B cell (primary cell): ENCODE measurements at regions of chr12 and their contacts with region 1.

Region 1: DNA sequence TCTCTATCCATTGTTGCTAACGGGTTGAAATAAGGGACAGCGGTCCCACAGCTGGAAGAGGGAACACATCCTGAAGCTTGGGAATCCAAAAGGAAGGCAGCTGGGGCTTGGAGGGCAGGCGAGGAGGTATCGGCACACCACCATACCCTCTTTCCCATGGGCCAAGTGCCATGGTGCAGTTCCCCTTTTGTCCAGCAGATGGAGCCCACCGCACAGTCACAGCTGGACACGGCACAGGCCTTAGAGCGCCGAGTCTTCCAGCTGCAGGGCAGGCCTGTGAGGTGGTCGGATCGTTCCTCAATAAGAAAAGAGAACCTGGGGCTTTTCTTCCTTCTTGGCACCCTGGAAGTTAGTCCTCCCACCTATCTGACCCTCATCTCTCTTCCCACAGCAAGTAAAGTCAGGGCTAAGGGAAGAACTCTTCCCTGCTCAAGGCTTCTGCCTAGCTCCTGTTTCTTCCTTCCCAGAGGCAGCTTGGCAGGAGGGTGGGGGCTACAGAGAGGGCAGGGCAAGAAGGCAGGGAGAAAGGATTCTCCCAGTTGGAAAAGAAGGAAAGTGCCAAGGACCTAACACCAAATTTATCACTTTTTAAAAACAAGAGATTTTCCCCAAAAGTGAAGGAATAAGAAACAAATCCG is 8.6 kb downstream of the PPP1R1A start:
- DNase-seq: peak; percentile 81
- ATAC-seq: peak; percentile 99
- H3K4me3 ChIP-seq: no peak overlapping the region
- H3K4me3 Mint-ChIP-seq: no peak overlapping the region
- H3K27ac ChIP-seq: no peak overlapping the region
- H3K27ac Mint-ChIP-seq: no peak overlapping the region
- H3K4me1 ChIP-seq: peaks cover 0 to 5% of the 10 kb centered on the region in 2 donors
- H3K4me1 Mint-ChIP-seq: peaks cover 8% of the 10 kb centered on the region
- H3K27me3 ChIP-seq: peaks cover 0 to 2% (median 0%) of the 10 kb centered on the region in 4 experiments
- H3K27me3 Mint-ChIP-seq: peaks cover 9% of the 10 kb centered on the region
- CTCF ChIP-seq: peak; percentile 99

Region 2: DNA sequence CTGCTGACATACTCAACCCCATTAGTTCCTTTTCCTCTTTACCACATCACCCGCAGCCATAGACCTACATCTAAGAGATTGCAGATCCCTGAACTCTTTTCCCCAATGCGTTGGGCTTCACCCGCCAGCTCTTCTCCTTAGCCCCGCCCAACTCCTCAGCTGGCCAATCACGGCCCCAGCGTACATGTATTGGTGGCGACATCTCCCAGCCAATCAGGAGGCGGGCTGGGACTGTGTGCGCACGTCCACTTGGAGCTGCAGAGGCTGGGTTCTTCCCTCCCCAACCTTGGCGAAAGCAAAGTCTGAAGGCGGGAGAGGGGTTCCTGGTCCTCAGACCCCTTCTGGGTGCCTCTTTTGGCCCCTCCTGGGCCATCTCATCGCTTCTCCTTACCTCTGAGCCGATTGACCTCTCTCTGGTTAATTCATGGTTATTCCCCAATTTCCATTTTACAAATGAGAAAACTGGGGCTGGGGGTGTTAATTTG is 19.4 kb before region 1 on chr12:
- CTCF ChIA-PET with region 1: interaction called, 12 read pairs
- POLR2A ChIA-PET with region 1: no interaction called
- intact Hi-C with region 1: no loop called
- DNase-seq: peak; percentile 88
- ATAC-seq: peak; percentile 100
- H3K4me3 ChIP-seq: peak overlapping the region; percentile 56 to 75 (median 70)
- H3K4me3 Mint-ChIP-seq: peak overlapping the region; percentile 94
- H3K27ac ChIP-seq: peak overlapping the region; percentile 50 to 56
- H3K27ac Mint-ChIP-seq: peak overlapping the region; percentile 80
- H3K4me1 ChIP-seq: peaks cover 13 to 19% of the 10 kb centered on the region in 2 donors
- H3K4me1 Mint-ChIP-seq: peaks cover 24% of the 10 kb centered on the region
- H3K27me3 ChIP-seq: no peaks in the 10 kb centered on the region
- H3K27me3 Mint-ChIP-seq: no peaks in the 10 kb centered on the region
- CTCF ChIP-seq: no peak

Region 3: DNA sequence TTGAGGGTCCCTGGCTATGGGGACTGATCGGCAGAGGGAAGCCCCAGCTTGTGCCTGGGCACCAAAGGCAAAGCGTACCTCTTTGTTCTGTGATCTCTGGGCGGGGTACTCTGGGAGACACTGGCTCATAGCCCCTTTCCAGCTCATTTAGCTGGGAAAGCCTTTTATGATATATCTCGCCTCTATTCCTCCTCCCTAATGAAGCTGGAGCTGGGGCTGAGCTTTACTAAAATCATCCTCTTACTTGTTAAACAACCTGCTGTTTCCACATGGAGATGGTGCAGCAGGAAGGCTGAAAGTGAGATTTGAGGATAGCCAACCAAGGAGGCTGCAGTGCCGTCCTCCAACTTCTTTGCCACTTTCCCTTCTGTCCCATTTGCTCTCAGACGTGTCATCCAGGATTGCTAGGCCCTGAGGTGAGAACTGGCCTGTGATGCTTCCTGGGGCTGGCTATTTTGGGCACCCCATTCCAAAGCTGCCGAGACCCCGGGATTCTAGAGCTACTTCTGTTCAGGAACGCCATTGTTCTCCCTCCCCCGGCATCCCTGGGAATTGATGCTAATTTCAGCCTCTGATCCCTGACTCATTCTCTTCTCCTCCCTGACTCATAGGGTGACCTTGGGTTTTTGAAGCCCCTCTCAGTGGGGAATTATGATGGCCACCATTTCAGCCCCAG is 14.4 kb before region 1 on chr12:
- CTCF ChIA-PET with region 1: interaction called, 12 read pairs
- POLR2A ChIA-PET with region 1: no interaction called
- intact Hi-C with region 1: no loop called
- DNase-seq: no peak
- ATAC-seq: no peak
- H3K4me3 ChIP-seq: no peak overlapping the region
- H3K4me3 Mint-ChIP-seq: no peak overlapping the region
- H3K27ac ChIP-seq: no peak overlapping the region
- H3K27ac Mint-ChIP-seq: no peak overlapping the region
- H3K4me1 ChIP-seq: peaks cover 8 to 11% of the 10 kb centered on the region in 2 donors
- H3K4me1 Mint-ChIP-seq: peaks cover 13% of the 10 kb centered on the region
- H3K27me3 ChIP-seq: no peaks in the 10 kb centered on the region
- H3K27me3 Mint-ChIP-seq: no peaks in the 10 kb centered on the region
- CTCF ChIP-seq: no peak

Region 4: GRCh38 chr12:54596526-54596946 is 16.7 kb after region 1 on chr12:
- CTCF ChIA-PET with region 1: interaction called, 17 read pairs
- POLR2A ChIA-PET with region 1: no interaction called
- intact Hi-C with region 1: no loop called
- DNase-seq: peak; percentile 52
- ATAC-seq: no peak
- H3K4me3 ChIP-seq: no peak overlapping the region
- H3K4me3 Mint-ChIP-seq: no peak overlapping the region
- H3K27ac ChIP-seq: no peak overlapping the region
- H3K27ac Mint-ChIP-seq: no peak overlapping the region
- H3K4me1 ChIP-seq: no peaks in the 10 kb centered on the region
- H3K4me1 Mint-ChIP-seq: no peaks in the 10 kb centered on the region
- H3K27me3 ChIP-seq: peaks cover 0 to 32% (median 3%) of the 10 kb centered on the region in 4 experiments
- H3K27me3 Mint-ChIP-seq: peaks cover 32% of the 10 kb centered on the region
- CTCF ChIP-seq: peak; percentile 85